HCT116 (cell line): ENCODE measurements at regions of chr2 and their contacts with region 1.

Region 1: DNA sequence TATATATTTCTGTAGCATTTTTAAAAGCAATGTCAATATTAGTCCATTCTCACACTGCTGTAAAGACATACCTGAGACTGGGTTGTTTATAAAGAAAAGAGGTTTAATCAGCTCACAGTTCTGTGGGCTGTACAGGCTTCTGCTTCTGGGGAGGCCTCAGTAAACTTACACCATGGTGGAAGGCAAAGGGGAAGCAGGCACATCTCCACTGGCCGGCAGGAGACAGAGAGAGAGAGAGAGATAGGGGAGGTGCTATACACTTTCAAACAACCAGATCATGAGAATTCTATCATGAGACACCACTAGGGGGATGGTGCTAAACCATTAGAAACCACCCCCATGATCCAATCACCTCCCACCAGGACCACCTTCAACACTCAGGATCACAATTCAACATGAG is 43.1 kb downstream of the CHMP3 start:
- DNase-seq: no peak
- ATAC-seq: no peak
- H3K4me3 ChIP-seq: no peak overlapping the region
- H3K27ac ChIP-seq: no peak overlapping the region
- H3K4me1 ChIP-seq: no peaks in the 10 kb centered on the region
- H3K27me3 ChIP-seq: no peaks in the 10 kb centered on the region
- CTCF ChIP-seq: peak in 1 of 3 experiments; percentile 19; a peak in 2 of 6 replicates
- POLR2A ChIP-seq: no peak
- RAD21 ChIP-seq: no peak

Region 2: DNA sequence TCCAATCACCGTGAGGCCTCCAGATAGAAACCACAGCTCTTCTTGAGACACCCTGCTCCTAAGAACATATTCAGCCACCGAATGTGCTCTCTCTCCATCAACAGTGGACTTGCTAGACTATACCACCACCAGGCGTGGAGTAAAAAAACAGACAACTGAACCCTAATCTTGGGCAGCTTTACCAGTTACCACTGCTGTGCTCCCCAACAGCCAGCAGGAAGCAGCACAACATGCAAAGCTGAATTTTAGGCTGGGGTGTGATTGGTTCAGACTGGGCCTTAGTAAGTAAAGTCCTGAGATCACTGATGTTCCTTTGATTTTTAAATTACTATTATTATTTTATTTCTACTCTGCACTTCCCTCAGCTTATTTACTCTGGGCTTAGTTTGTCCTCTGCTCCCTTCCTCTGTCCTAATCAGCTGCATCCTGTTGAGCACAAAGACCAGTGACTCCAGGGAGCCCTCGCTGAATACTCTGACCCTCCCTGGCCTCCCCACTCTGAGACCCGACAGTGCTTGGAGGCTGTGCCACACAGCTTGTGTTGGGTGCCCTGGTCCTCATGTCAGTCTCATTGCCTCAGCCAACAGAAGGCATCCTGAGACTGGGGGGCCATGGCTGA is 299.0 kb before region 1 on chr2:
- CTCF ChIA-PET with region 1: no interaction called
- POLR2A ChIA-PET with region 1: no interaction called
- RAD21 ChIA-PET with region 1: no interaction called
- intact Hi-C with region 1: no loop called
- DNase-seq: peak; percentile 27
- ATAC-seq: peak; percentile 88
- H3K4me3 ChIP-seq: no peak overlapping the region
- H3K27ac ChIP-seq: no peak overlapping the region
- H3K4me1 ChIP-seq: no peaks in the 10 kb centered on the region
- H3K27me3 ChIP-seq: no peaks in the 10 kb centered on the region
- CTCF ChIP-seq: peak; percentile 87 to 97 (median 87)
- POLR2A ChIP-seq: no peak
- RAD21 ChIP-seq: peak; percentile 84

Region 3: GRCh38 chr2:86695053-86695691 is 175.0 kb after region 1 on chr2:
- CTCF ChIA-PET with region 1: no interaction called
- POLR2A ChIA-PET with region 1: no interaction called
- RAD21 ChIA-PET with region 1: no interaction called
- intact Hi-C with region 1: loop called (anchors 10 kb)
- DNase-seq: peak; percentile 85
- ATAC-seq: peak; percentile 92
- H3K4me3 ChIP-seq: no peak overlapping the region
- H3K27ac ChIP-seq: peak overlapping the region; percentile 25; the same call in 1 of the 2 replicates
- H3K4me1 ChIP-seq: peaks cover 0 to 14% of the 10 kb centered on the region in 2 experiments; a peak in 2 of 4 replicates
- H3K27me3 ChIP-seq: no peaks in the 10 kb centered on the region
- CTCF ChIP-seq: no peak
- POLR2A ChIP-seq: no peak
- RAD21 ChIP-seq: no peak